Activated CD4-positive, alpha-beta T cell treated with anti-CD3 and anti-CD28 coated beads, Interleukin-2, amount 10 ng/mL, durations not matched to agents 7 days and 5 days (primary cell): ENCODE measurements at regions of chr1 and their contacts with region 1.

Region 1: GRCh38 chr1:206583707-206584648 is 28.3 kb downstream of the EIF2D start:
- DNase-seq: peak; percentile 89
- H3K4me3 Mint-ChIP-seq: peak overlapping the region; percentile 49
- H3K27ac Mint-ChIP-seq: peak overlapping the region; percentile 91
- H3K4me1 Mint-ChIP-seq: peaks cover 93% of the 10 kb centered on the region
- H3K27me3 Mint-ChIP-seq: no peaks in the 10 kb centered on the region

Region 2: GRCh38 chr1:206469933-206470691 is 113.9 kb before region 1 on chr1 and contains the start of gene IKBKE:
- CTCF ChIA-PET with region 1: interaction called, 11 read pairs
- POLR2A ChIA-PET with region 1: interaction called, 3 read pairs
- DNase-seq: peak; percentile 73
- H3K4me3 Mint-ChIP-seq: peak within 1 kb of the TSS; percentile 78
- H3K27ac Mint-ChIP-seq: peak within 1 kb of the TSS; percentile 72
- H3K4me1 Mint-ChIP-seq: peaks cover 88% of the 10 kb centered on the region
- H3K27me3 Mint-ChIP-seq: no peaks in the 10 kb centered on the region
- total RNA-seq, gene IKBKE: 72.6 to 85.1 TPM

Region 3: DNA sequence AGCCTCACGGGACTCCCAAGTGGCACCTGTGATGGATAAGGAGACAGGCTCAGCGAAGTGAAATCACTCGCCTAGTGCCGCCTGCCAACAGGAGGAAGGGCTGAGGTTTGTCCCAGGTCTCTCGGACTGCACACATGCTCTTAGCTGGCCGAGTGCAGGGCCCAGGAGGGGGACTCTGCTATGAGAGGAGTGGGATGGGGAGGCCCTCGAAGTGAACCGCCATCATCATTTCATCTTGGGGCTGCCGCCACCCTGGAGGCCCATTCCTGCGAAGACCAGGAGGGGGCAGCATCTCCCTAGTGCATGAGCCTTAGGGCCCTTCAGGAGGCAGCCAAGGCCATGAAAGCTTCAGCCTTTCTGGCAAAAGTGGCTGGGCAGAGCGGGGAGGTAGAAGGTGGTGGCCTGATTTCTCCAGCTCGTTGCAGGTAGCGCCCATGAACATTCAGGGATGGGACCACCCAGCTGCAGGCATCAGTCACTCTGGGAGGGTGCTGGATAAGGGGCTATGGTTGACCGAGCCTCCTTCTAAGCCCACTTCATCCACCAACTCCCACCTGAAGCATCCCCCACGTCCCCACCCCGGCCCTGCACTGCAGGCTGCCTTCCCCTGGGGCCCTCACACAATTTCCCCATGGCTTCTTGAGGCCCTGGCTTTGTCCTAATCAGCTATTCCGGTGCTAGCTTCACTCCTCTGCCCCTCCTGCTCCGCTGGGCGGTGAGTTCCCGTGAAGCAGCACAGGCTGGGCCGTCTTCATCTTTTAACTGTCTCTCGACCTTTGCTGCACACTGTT is 93.8 kb before region 1 on chr1:
- CTCF ChIA-PET with region 1: interaction called, 19 read pairs
- POLR2A ChIA-PET with region 1: no interaction called
- DNase-seq: peak; percentile 74
- H3K4me3 Mint-ChIP-seq: no peak overlapping the region
- H3K27ac Mint-ChIP-seq: no peak overlapping the region
- H3K4me1 Mint-ChIP-seq: peaks cover 17% of the 10 kb centered on the region
- H3K27me3 Mint-ChIP-seq: no peaks in the 10 kb centered on the region

Region 4: DNA sequence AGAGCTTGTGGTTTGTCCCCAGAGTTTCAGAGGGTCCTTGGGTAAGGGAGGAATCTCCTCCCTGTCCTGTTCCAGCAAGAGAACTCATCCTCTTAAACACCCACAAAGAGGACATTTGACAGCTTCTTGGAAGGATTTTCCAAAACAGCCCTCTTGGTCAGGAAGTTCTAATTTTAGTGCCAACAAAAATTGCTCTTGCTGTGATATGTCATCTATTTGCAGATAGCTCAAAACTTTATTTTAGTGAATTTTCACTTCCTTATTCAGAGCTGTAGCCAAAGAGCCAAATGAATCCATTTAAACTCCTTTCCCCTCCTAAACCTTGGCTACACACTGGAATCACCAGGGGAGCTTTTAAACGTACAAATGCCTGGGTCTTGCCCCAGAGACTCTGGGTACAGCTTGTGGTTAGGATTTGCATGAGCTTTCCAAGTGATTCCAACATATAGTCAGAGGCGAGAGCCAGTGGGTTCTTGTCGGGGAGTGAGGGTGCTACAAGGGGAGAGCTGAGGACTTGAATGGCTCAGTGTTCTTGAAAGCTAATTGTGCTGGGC is 88.4 kb before region 1 on chr1:
- CTCF ChIA-PET with region 1: interaction called, 19 read pairs
- POLR2A ChIA-PET with region 1: no interaction called
- DNase-seq: no peak
- H3K4me3 Mint-ChIP-seq: no peak overlapping the region
- H3K27ac Mint-ChIP-seq: no peak overlapping the region
- H3K4me1 Mint-ChIP-seq: peaks cover 16% of the 10 kb centered on the region
- H3K27me3 Mint-ChIP-seq: no peaks in the 10 kb centered on the region

Region 5: DNA sequence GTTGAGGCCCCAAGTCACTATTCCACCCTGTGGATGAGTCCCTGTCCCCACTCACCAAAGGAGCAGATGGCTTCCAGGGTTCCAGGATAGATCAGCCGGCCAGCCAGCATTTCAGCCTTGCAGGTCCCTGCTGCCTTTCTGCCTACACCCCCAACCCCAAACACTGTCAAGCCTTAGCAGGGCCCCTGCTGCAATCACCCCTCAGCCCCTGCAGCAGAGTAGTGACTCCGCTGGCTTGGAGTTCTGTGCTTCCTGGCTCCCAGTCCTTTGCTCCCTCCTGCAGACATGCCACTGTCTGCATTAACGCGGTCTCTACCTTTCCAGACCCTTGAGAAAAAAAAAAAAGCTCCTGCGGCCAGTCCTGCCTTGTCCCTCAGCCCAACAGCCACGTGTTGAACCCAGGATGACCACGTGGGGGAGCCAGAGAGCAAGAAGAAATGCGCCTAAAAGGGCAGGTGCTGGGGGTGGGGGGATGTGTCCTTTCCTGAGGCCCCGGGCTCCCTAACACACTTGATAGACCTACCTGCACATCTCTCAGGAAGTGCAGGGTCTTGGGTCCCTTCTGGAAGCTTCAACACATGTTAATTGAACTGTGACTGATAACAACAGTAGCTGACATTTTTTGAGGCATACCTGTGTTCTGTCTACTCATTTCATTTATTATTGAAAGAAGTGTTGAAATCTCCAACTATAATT is 39.3 kb before region 1 on chr1:
- CTCF ChIA-PET with region 1: interaction called, 45 read pairs
- POLR2A ChIA-PET with region 1: no interaction called
- DNase-seq: peak; percentile 85
- H3K4me3 Mint-ChIP-seq: no peak overlapping the region
- H3K27ac Mint-ChIP-seq: peak overlapping the region; percentile 60
- H3K4me1 Mint-ChIP-seq: peaks cover 25% of the 10 kb centered on the region
- H3K27me3 Mint-ChIP-seq: no peaks in the 10 kb centered on the region

Region 6: DNA sequence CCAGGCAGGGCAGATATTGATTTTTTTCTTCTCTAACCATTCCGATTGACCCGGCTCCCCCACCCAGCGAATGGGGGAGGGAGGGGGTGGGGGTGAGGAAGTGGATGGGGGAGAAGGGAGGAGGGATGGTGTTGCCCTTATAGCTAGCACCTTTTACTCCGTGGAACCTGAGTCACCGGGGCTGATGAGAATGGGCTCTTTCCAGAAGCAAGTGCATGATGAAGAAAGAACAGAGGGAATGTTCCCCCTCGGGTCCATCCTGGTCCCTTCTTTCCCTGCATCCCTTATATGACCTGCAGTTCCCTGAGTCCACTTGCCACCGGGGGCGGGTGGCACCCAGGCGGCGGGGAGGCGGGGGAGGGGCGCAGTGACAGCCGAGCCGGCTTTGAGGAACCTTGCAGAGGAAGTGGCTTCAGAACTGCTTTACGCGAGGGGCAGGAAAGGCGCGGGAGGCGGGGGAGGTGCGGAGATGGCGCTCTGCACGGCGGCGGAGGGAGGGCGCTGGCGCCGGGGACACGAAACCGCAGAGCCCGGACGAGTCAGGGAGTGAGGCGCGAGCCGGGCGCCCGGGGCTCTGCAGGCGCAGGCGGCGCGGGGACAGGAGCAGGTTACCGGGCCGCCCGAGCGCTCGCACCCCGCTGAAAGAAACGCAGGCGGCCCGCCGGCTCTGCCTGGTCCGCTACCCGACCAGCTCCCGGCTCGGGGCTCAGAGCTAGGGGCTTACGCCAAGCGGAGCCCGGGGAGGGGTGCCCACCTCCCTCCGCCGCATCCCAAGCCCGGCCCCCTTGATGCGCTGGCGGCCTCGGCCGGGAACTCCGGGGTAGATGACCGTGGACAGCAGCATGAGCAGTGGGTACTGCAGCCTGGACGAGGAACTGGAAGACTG is 27.0 kb before region 1 on chr1:
- CTCF ChIA-PET with region 1: interaction called, 412 read pairs
- POLR2A ChIA-PET with region 1: interaction called, 4 read pairs
- DNase-seq: peak; percentile 92
- H3K4me3 Mint-ChIP-seq: peak overlapping the region; percentile 87
- H3K27ac Mint-ChIP-seq: peak overlapping the region; percentile 92
- H3K4me1 Mint-ChIP-seq: peaks cover 72% of the 10 kb centered on the region
- H3K27me3 Mint-ChIP-seq: no peaks in the 10 kb centered on the region

Region 7: GRCh38 chr1:206649261-206649921 is 65.4 kb after region 1 on chr1:
- CTCF ChIA-PET with region 1: no interaction called
- POLR2A ChIA-PET with region 1: no interaction called
- DNase-seq: no peak
- H3K4me3 Mint-ChIP-seq: no peak overlapping the region
- H3K27ac Mint-ChIP-seq: no peak overlapping the region
- H3K4me1 Mint-ChIP-seq: no peaks in the 10 kb centered on the region
- H3K27me3 Mint-ChIP-seq: no peaks in the 10 kb centered on the region

Region 8: DNA sequence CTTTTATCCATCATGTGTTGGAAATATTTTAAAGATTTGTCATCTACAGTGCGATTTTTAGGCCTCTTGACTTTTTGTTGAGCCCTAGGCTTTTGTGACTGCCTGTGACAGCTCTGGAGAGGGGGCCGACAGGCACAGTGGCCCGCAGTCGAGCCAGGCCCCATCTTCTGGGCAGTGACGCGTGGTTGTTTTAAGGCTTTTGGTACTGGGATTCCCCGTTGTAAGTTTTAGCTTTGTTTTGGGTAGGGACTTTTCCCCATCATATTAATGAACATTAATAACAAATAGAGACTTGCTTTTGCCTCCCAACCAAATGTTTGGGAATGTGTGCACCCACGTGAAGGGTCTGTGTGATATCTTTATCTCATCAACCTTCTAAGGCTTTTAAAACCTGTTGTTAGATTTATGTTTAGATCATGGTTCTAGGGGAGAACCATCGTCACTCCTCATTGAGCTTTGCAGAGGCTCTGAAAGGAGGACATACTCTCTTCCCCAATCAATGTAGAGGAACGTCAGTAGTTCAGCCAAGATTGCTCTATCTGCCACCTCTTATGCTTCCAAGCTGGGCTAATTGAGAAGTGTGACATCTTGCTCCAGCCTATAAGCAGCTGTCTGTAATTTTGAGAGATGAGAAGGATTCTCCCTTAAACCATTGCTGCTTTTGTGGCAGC is 135.3 kb after region 1 on chr1:
- CTCF ChIA-PET with region 1: no interaction called
- POLR2A ChIA-PET with region 1: no interaction called
- DNase-seq: no peak
- H3K4me3 Mint-ChIP-seq: no peak overlapping the region
- H3K27ac Mint-ChIP-seq: no peak overlapping the region
- H3K4me1 Mint-ChIP-seq: peaks cover 62% of the 10 kb centered on the region
- H3K27me3 Mint-ChIP-seq: no peaks in the 10 kb centered on the region